ENCODE measurements at regions of chr3 and their contacts with region 1.

Region 1: DNA sequence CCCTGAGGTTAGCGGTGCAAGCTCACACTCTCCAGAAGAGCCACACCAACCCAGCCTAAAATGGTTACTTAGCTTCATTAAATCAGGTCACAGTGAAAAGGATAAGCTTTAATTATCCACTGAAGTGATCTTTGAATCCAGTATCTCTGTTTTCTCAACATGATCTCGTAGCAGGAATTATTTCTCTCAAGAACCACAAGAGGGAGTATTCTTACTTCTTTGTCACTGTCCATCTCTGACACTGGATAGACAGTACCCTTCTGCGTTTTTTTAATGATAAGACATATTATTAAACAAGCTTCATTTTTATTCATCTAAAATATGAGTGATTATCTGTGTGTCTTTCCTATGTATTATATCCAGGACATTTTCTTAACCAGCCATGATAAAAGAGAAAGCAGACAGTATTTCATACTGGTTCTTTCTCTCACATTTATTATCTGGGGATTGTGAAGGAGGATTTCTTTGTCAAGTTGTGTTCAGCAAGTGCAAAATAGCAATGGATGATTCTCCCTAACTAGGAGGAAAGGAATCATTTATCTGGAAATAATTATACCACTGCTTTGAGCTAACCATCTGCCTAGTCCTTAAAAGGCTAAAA is 105.4 kb upstream of the CCDC54 start:
- DNase-seq: peak in 3 of 14 experiments; percentile 21 to 32 (median 30)
- ATAC-seq: no peak
- H3K4me3 ChIP-seq: no peak overlapping the region
- H3K4me3 Mint-ChIP-seq: no peak overlapping the region
- H3K27ac ChIP-seq: no peak overlapping the region
- H3K27ac Mint-ChIP-seq: no peak overlapping the region
- H3K4me1 ChIP-seq: no peaks in the 10 kb centered on the region
- H3K4me1 Mint-ChIP-seq: no peaks in the 10 kb centered on the region
- H3K27me3 ChIP-seq: peaks cover 0 to 5% of the 10 kb centered on the region in 2 experiments
- H3K27me3 Mint-ChIP-seq: peaks cover 22% of the 10 kb centered on the region
- CTCF ChIP-seq: peak; percentile 76

Region 2: GRCh38 chr3:106814231-106814630 is 457.7 kb before region 1 on chr3:
- CTCF ChIA-PET with region 1: no interaction called
- POLR2A ChIA-PET with region 1: no interaction called
- intact Hi-C with region 1: no loop called
- DNase-seq: no peak
- ATAC-seq: no peak
- H3K4me3 ChIP-seq: no peak overlapping the region
- H3K4me3 Mint-ChIP-seq: no peak overlapping the region
- H3K27ac ChIP-seq: no peak overlapping the region
- H3K27ac Mint-ChIP-seq: no peak overlapping the region
- H3K4me1 ChIP-seq: no peaks in the 10 kb centered on the region
- H3K4me1 Mint-ChIP-seq: no peaks in the 10 kb centered on the region
- H3K27me3 ChIP-seq: no peaks in the 10 kb centered on the region
- H3K27me3 Mint-ChIP-seq: no peaks in the 10 kb centered on the region
- CTCF ChIP-seq: no peak

Region 3: GRCh38 chr3:107421170-107421792 is 149.4 kb after region 1 on chr3:
- CTCF ChIA-PET with region 1: interaction called, 4 read pairs
- POLR2A ChIA-PET with region 1: no interaction called
- intact Hi-C with region 1: loop called (anchors 5 kb)
- DNase-seq: peak in 4 of 14 experiments; percentile 16 to 68 (median 66)
- ATAC-seq: peak; percentile 65
- H3K4me3 ChIP-seq: no peak overlapping the region
- H3K4me3 Mint-ChIP-seq: no peak overlapping the region
- H3K27ac ChIP-seq: no peak overlapping the region
- H3K27ac Mint-ChIP-seq: no peak overlapping the region
- H3K4me1 ChIP-seq: no peaks in the 10 kb centered on the region
- H3K4me1 Mint-ChIP-seq: peaks cover 3% of the 10 kb centered on the region
- H3K27me3 ChIP-seq: no peaks in the 10 kb centered on the region
- H3K27me3 Mint-ChIP-seq: peaks cover 3% of the 10 kb centered on the region
- CTCF ChIP-seq: peak; percentile 73

Region 4: DNA sequence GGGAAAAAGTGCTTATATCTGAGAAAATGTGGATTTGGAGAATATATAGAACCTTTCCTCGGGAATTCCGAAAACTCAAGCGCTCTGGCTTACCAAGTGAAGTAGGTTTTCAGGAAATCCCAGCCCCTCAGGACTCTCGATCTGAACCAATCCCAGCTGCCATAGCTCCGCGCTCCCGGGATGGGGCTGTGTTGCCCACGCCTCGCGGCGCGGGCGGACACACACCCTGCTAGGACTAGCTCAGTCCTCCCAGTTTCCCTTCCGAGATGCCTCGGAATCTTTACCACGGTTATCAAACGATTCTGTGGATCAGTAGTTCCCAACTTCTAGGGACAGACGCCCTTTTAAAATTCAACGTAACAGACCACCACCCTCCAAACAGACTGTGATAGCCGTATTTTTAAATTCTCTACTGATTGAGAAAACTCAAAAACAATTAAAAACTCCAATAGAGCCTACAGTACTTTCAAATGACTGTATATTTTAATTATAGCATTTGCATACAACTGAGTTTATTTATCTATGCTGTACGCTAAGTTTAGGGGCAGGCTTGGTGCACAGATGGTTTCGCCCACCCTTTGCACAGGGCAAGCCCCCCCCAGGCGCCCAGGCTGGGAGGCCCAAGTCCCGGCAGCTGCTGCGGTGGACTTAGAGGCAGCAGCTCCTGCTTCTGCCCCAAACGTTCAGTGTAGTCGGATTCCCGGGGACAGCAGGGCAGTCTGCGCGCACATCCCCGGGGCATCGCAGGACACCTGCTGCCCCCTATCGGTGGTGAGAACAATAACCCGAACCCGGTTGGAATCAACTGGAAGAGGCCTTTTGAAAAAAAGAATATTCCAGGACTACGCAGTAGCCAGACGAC is 157.7 kb after region 1 on chr3:
- CTCF ChIA-PET with region 1: no interaction called
- POLR2A ChIA-PET with region 1: no interaction called
- intact Hi-C with region 1: loop called (anchors 5 kb)
- DNase-seq: peak; percentile 18 to 81 (median 44)
- ATAC-seq: peak; percentile 66
- H3K4me3 ChIP-seq: peak overlapping the region; percentile 68
- H3K4me3 Mint-ChIP-seq: peak overlapping the region; percentile 93
- H3K27ac ChIP-seq: no peak overlapping the region
- H3K27ac Mint-ChIP-seq: peak overlapping the region; percentile 50
- H3K4me1 ChIP-seq: peaks cover 24% of the 10 kb centered on the region
- H3K4me1 Mint-ChIP-seq: peaks cover 18% of the 10 kb centered on the region
- H3K27me3 ChIP-seq: no peaks in the 10 kb centered on the region
- H3K27me3 Mint-ChIP-seq: no peaks in the 10 kb centered on the region
- CTCF ChIP-seq: peak; percentile 90

Region 5: GRCh38 chr3:107543666-107544065 is 271.8 kb after region 1 on chr3:
- CTCF ChIA-PET with region 1: no interaction called
- POLR2A ChIA-PET with region 1: no interaction called
- intact Hi-C with region 1: loop called (anchors 5 to 10 kb)
- DNase-seq: peak in 4 of 14 experiments; percentile 9 to 47 (median 27)
- ATAC-seq: no peak
- H3K4me3 ChIP-seq: no peak overlapping the region
- H3K4me3 Mint-ChIP-seq: no peak overlapping the region
- H3K27ac ChIP-seq: no peak overlapping the region
- H3K27ac Mint-ChIP-seq: no peak overlapping the region
- H3K4me1 ChIP-seq: peaks cover 2% of the 10 kb centered on the region
- H3K4me1 Mint-ChIP-seq: peaks cover 71% of the 10 kb centered on the region
- H3K27me3 ChIP-seq: no peaks in the 10 kb centered on the region
- H3K27me3 Mint-ChIP-seq: no peaks in the 10 kb centered on the region
- CTCF ChIP-seq: no peak

Measured in CD4-positive, alpha-beta T cell (primary cell).